CD8-positive, alpha-beta T cell (primary cell): ENCODE measurements at regions of chr14 and their contacts with region 1.

Region 1: DNA sequence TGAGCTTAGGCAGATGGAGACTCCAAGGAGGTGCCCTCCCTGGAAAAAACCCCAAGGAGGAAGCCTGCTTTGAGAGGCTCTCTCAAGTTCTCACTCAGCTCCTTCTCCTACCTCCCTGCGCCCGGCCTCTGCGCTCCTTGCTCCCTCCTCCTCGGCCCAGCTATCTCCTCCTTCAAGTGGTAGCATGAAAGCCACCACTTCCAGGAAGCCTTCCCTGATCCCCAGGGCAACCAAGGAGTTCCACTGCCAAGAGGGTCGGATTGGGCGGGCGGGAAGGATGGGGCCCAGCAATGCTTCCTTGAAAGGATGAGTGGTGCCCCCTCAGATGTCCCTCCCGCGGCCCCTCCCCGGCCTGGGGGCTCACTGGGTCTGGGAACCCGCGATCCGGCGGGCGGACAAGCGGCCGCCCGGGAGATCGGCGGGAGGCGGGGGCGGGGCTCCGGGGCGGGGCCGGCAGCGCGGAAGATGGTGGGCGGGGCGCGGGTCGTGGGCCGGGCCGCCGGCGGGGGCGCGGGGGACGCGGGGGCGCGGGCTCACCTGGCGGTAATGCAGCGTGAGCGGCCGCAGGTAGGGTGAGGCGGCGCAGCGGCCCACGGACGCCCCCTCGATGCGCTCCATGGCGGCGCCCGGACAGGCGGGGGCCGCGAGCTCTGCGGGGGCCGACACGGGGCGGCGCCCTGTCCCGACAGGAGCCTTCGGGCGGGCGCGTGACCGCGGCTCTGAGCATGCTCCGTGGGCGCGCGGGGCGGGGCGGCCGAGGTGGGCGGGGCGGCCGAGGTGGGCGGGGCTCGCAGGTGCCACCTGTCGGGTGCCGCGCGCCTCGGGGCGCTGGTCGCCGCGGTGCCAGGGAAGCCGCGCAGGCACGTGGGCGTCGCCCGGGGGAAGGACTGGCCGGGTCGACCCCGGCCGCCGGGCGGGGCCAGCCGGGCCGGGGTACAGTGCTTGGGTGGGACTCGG is at the start of gene NUDT14:
- DNase-seq: peak; percentile 77 to 95 (median 86)
- ATAC-seq: peak; percentile 94
- H3K4me3 ChIP-seq: peak within 1 kb of the TSS; percentile 36 to 37
- H3K4me3 Mint-ChIP-seq: peak within 1 kb of the TSS; percentile 76
- H3K27ac ChIP-seq: no peak within 1 kb of the TSS
- H3K27ac Mint-ChIP-seq: no peak within 1 kb of the TSS
- H3K4me1 ChIP-seq: peaks cover 25% of the 10 kb centered on the region
- H3K4me1 Mint-ChIP-seq: peaks cover 16% of the 10 kb centered on the region
- H3K27me3 ChIP-seq: no peaks in the 10 kb centered on the region
- H3K27me3 Mint-ChIP-seq: no peaks in the 10 kb centered on the region
- CTCF ChIP-seq: no peak
- total RNA-seq, gene NUDT14: 5.7 to 6.2 TPM

Region 2: DNA sequence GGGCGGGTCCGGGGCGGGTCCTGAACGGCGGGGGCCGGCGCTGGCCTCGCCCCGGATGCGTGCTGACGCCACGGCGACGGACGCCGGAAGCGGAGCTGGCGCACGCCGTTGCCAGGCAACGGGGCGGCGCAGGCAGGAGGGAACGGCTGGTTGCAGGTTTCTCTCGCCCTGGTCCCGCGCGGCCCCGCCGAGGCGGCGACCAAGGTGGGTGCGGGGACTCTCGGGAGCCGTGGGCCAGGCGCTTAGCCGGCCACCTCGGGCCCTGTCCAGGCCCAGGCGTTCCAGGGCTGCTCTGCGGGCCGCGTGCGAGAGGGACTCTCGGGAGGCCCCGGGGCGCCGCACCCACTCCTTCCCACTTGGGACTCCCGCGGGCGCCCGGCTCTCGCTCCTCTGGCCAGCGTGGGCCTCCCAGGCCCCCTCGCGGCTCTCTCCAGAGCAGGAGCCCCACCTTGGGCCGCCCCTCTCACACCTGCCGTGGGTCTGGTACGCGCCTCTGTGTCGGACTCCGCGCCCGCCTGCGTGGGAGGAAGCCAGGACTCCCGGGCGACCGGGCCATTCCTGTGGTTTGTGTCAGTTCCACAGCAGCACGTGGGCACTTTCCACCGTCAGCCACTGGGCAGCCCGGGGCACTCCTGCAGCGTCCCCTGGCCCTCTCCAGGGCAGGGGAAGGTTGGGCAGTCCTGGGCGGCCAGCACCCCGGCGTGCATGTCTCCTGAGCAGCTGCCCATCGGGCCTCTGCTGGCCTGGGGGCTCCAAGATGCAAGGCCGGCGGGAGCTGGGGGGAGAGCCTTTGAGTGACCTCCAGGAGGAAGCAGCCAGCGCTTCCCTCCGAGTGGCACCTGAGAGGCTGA is 195.0 kb before region 1 on chr14 and contains the start of gene CLBA1:
- CTCF ChIA-PET with region 1: no interaction called
- POLR2A ChIA-PET with region 1: no interaction called
- intact Hi-C with region 1: loop called in 1 of 2 experiments (anchors 5 kb)
- DNase-seq: peak; percentile 75 to 97 (median 87)
- ATAC-seq: peak; percentile 94
- H3K4me3 ChIP-seq: peak within 1 kb of the TSS; percentile 54 to 60
- H3K4me3 Mint-ChIP-seq: peak within 1 kb of the TSS; percentile 78
- H3K27ac ChIP-seq: peak within 1 kb of the TSS; percentile 60 to 73
- H3K27ac Mint-ChIP-seq: peak within 1 kb of the TSS; percentile 57
- H3K4me1 ChIP-seq: peaks cover 8% of the 10 kb centered on the region
- H3K4me1 Mint-ChIP-seq: peaks cover 5% of the 10 kb centered on the region
- H3K27me3 ChIP-seq: no peaks in the 10 kb centered on the region
- H3K27me3 Mint-ChIP-seq: peaks cover 6% of the 10 kb centered on the region
- CTCF ChIP-seq: no peak
- total RNA-seq, gene CLBA1: 0.84 to 1.0 TPM

Region 3: DNA sequence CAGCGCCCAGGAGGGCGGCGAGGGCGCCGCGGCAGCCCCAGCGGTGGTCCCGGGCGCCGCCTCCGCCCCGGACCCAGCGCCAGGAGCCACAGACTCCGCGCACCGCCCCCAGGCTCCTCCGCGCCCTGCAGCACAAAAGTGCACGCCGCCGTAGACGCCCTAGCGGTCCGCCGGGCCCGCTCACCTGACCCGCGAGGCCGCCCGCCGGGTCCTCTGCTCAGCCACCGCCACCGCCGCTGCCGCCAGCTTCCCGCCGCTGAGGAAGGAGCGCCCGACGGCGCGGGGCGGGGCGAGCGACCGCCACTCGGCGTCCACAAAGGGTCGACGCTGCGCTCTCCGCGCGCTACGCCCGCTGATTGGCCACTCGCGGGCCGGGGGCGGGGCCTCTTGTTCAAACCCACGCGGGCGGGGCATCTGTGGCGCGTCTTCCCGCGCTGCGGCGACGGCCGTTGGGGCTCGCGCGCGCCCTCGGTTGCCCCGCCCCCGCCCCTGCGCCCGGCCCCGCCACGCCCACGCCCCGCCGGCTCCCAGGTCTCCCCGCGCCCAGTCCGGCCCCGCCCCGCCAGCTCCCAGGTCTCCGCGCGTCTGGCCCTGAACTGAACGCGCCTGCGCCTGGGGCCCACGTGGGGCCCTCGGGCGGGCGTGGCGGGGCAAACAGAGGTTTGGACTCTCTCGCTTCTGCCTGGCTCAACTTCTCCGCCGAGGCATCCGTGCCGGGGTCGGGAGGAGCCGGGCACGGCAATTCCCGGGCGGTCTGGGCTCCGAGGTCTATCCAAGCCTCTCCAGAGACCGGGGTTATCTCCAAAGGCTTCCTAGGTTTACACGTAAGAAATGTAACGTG is 159.8 kb before region 1 on chr14 and contains the start of gene CDCA4:
- CTCF ChIA-PET with region 1: no interaction called
- POLR2A ChIA-PET with region 1: no interaction called
- intact Hi-C with region 1: loop called in 1 of 2 experiments (anchors 1 kb)
- DNase-seq: peak; percentile 97 to 99 (median 98)
- ATAC-seq: peak; percentile 82
- H3K4me3 ChIP-seq: peak within 1 kb of the TSS; percentile 58 to 87
- H3K4me3 Mint-ChIP-seq: peak within 1 kb of the TSS; percentile 89
- H3K27ac ChIP-seq: peak within 1 kb of the TSS; percentile 78 to 81
- H3K27ac Mint-ChIP-seq: peak within 1 kb of the TSS; percentile 96
- H3K4me1 ChIP-seq: peaks cover 23% of the 10 kb centered on the region
- H3K4me1 Mint-ChIP-seq: peaks cover 53% of the 10 kb centered on the region
- H3K27me3 ChIP-seq: no peaks in the 10 kb centered on the region
- H3K27me3 Mint-ChIP-seq: no peaks in the 10 kb centered on the region
- CTCF ChIP-seq: no peak
- total RNA-seq, gene CDCA4: 20.2 to 22.9 TPM

Region 4: DNA sequence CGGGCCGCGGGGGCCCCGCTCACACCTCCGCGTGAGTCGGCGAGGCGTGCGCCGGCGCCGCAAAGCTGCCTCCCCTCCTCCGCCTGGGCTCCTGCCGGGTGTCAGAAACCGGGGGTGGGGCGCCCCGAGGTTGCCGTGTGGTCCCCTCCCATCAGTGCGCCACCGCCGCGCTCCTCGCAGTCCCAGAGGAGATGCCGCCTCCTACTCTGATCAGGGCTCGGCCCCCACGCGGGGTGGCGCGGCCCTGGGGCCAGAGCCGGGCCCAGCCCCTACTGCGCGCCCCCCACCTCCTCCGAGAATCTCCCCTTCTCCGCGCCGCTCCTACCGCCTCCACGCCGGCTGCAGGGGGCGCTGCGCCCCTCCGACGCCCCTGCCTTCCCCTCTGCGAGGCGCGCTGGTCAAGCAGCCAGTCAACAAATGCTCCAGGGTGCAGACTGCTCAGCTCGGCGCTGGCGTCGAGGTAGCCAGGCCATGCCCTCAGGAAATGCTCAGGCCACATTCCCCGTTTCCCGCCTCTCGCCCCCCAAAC is 11.8 kb before region 1 on chr14:
- CTCF ChIA-PET with region 1: interaction called, 6 read pairs
- POLR2A ChIA-PET with region 1: interaction called, 3 read pairs
- intact Hi-C with region 1: loop called in 1 of 2 experiments (anchors 1 kb)
- DNase-seq: peak in 5 of 9 experiments; percentile 28 to 63 (median 34)
- ATAC-seq: peak; percentile 47
- H3K4me3 ChIP-seq: peak overlapping the region in 1 of 2 experiments; percentile 27
- H3K4me3 Mint-ChIP-seq: peak overlapping the region; percentile 77
- H3K27ac ChIP-seq: no peak overlapping the region
- H3K27ac Mint-ChIP-seq: no peak overlapping the region
- H3K4me1 ChIP-seq: peaks cover 23% of the 10 kb centered on the region
- H3K4me1 Mint-ChIP-seq: peaks cover 8% of the 10 kb centered on the region
- H3K27me3 ChIP-seq: peaks cover 14 to 20% of the 10 kb centered on the region in 2 experiments
- H3K27me3 Mint-ChIP-seq: peaks cover 18% of the 10 kb centered on the region
- CTCF ChIP-seq: peak; percentile 53

Region 5: DNA sequence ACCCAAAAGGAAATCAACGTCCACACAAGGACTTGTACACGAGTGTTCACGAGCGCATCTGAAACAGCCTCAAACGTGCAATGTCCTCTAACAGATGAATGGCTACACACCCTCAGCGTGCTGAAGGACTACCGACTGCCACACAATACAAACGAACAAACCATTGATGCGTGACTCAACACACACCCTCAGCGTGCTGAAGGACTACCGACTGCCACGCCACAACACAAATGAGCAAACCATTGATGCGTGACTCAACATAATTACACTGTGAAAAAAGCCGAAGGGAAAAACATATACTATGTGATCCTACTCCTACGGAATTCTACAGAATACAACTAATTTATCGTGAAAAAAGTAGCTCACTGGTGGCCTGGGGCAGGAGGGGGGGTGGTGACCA is 42.4 kb after region 1 on chr14:
- CTCF ChIA-PET with region 1: no interaction called
- POLR2A ChIA-PET with region 1: no interaction called
- intact Hi-C with region 1: no loop called
- DNase-seq: no peak
- ATAC-seq: no peak
- H3K4me3 ChIP-seq: no peak overlapping the region
- H3K4me3 Mint-ChIP-seq: no peak overlapping the region
- H3K27ac ChIP-seq: no peak overlapping the region
- H3K27ac Mint-ChIP-seq: no peak overlapping the region
- H3K4me1 ChIP-seq: no peaks in the 10 kb centered on the region
- H3K4me1 Mint-ChIP-seq: no peaks in the 10 kb centered on the region
- H3K27me3 ChIP-seq: no peaks in the 10 kb centered on the region
- H3K27me3 Mint-ChIP-seq: no peaks in the 10 kb centered on the region
- CTCF ChIP-seq: no peak

Region 6: DNA sequence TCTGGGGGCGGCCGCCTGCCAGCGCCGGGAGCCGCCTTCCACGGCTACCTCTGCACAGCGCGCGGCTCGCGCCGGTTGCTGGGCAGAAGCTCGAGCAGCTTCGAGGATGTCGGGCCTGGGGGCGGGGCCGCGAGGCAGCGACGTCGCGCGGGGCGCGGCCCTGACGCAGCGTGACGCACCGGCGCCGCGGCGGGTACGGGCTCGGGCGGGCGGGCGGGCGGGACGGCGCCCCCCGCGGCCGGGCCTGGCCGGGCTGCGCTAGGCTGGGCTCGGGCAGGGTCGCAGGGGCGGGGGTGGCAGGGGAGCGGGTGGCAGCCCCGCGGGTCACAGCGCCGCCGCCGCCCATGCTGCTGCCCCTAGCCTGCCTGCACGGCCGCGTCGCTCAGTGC is 67.5 kb after region 1 on chr14 and contains the start of gene BTBD6:
- CTCF ChIA-PET with region 1: no interaction called
- POLR2A ChIA-PET with region 1: no interaction called
- intact Hi-C with region 1: loop called in 1 of 2 experiments (anchors 10 kb)
- DNase-seq: peak; percentile 80 to 95 (median 88)
- ATAC-seq: peak; percentile 91
- H3K4me3 ChIP-seq: peak within 1 kb of the TSS; percentile 60 to 73
- H3K4me3 Mint-ChIP-seq: peak within 1 kb of the TSS; percentile 78
- H3K27ac ChIP-seq: peak within 1 kb of the TSS; percentile 51 to 73
- H3K27ac Mint-ChIP-seq: peak within 1 kb of the TSS; percentile 75
- H3K4me1 ChIP-seq: peaks cover 21% of the 10 kb centered on the region
- H3K4me1 Mint-ChIP-seq: peaks cover 33% of the 10 kb centered on the region
- H3K27me3 ChIP-seq: no peaks in the 10 kb centered on the region
- H3K27me3 Mint-ChIP-seq: no peaks in the 10 kb centered on the region
- CTCF ChIP-seq: no peak
- total RNA-seq, gene BTBD6: 34.1 to 34.4 TPM

Region 7: DNA sequence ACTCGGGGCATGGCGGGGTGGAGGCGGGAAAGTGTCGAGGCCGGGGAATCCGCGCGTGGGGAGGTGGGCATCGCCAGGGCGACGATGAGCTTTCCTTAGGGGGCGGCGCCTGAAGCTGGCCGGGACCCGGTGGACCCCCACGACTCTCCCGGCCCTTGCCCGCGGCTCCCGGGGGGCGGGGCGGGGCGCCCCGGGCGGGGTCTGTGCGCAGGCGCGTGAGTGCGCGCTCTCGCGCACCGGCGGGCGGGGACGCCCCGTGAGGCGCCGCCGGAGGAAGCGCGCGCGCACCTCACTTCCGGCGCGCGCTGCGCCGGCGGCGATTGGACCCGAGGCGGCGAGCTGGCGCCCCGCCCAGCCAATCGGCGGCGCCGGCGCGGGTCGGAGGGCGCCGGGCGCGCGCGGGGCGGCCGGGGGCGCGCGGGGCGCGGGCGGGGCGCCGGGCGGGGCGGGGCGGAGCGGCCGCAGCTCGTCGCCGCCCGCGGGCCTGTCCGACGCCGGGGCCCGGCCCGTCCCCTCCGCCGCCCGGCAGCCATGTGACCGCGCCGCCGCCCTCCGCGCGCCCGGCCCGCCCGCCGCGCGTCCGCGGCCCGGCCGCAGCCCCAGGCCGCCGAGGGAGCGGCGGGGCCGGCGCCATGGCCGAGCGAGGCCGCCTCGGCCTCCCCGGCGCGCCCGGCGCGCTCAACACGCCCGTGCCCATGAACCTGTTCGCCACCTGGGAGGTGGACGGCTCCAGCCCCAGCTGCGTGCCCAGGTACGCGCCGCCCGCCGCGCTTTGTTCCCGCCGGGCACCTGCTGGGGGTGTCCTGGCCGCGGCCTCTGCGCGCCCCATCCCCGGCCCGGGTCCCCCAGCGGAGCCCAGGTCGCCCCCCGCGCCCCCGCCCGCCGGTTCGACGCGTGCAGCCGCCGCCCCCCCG is 133.7 kb after region 1 on chr14 and contains the start of gene PACS2:
- CTCF ChIA-PET with region 1: no interaction called
- POLR2A ChIA-PET with region 1: no interaction called
- intact Hi-C with region 1: loop called in 1 of 2 experiments (anchors 2 kb)
- DNase-seq: peak; percentile 47 to 96 (median 76)
- ATAC-seq: peak; percentile 73
- H3K4me3 ChIP-seq: peak within 1 kb of the TSS; percentile 55 to 60
- H3K4me3 Mint-ChIP-seq: peak within 1 kb of the TSS; percentile 91
- H3K27ac ChIP-seq: peak within 1 kb of the TSS; percentile 24 to 52
- H3K27ac Mint-ChIP-seq: peak within 1 kb of the TSS; percentile 85
- H3K4me1 ChIP-seq: peaks cover 21% of the 10 kb centered on the region
- H3K4me1 Mint-ChIP-seq: peaks cover 24% of the 10 kb centered on the region
- H3K27me3 ChIP-seq: no peaks in the 10 kb centered on the region
- H3K27me3 Mint-ChIP-seq: no peaks in the 10 kb centered on the region
- CTCF ChIP-seq: no peak
- total RNA-seq, gene PACS2: 46.5 to 56.1 TPM

Region 8: DNA sequence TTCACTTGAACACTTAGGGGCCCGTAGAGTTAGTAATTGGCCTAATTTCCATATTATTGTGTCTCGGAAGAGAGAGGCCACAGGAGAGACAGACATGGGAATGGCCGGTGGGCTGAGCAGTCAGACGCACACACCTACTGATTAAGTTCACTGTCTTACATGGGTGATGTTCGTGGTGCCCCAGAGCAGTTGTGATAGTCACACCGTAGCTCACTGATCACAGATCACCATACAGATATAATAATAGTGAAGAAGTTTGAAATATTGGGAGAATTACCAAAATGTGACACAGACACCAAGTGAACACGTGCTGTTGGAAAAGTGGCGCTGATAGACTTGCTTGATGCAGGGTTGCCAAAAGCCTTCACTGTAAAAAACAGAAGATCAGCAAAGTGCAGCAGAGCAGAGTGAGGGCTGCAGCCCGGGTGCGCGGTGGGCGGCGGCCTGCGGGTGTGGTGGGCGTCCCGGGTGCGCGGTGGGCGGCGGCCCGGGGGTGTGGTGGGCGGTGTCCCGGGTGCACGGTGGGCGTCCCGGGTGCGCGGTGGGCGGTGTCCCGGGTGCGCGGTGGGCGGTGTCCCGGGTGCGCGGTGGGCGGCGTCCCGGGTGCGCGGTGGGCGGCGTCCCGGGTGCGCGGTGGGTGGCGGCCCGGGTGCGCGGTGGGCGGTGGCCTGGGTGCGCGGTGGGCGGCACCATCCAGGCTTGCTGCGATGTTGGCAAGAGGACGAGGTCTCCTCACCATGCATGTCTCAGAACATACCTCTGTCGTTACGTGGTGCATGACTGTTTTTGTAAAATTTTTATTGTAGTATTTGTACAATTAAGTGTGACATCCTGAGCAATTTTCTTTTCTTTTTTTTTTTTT is 183.2 kb after region 1 on chr14:
- CTCF ChIA-PET with region 1: no interaction called
- POLR2A ChIA-PET with region 1: no interaction called
- intact Hi-C with region 1: loop called in 1 of 2 experiments (anchors 5 kb)
- DNase-seq: peak; percentile 25 to 77 (median 56)
- ATAC-seq: peak; percentile 88
- H3K4me3 ChIP-seq: no peak overlapping the region
- H3K4me3 Mint-ChIP-seq: peak overlapping the region; percentile 68
- H3K27ac ChIP-seq: no peak overlapping the region
- H3K27ac Mint-ChIP-seq: peak overlapping the region; percentile 58
- H3K4me1 ChIP-seq: peaks cover 13% of the 10 kb centered on the region
- H3K4me1 Mint-ChIP-seq: peaks cover 13% of the 10 kb centered on the region
- H3K27me3 ChIP-seq: no peaks in the 10 kb centered on the region
- H3K27me3 Mint-ChIP-seq: no peaks in the 10 kb centered on the region
- CTCF ChIP-seq: no peak